HepG2 (cell line): ENCODE measurements at regions of chr14 and their contacts with region 1.

Region 1: GRCh38 chr14:70907176-70907995 is at the start of gene PCNX1:
- DNase-seq: peak; percentile 79
- ATAC-seq: peak; percentile 85
- H3K4me3 ChIP-seq: peak within 1 kb of the TSS; percentile 92 to 98 (median 96)
- H3K27ac ChIP-seq: peak within 1 kb of the TSS; percentile 81
- H3K4me1 ChIP-seq: peaks cover 55% of the 10 kb centered on the region
- H3K27me3 ChIP-seq: no peaks in the 10 kb centered on the region; a peak in 2 of 5 replicates
- CTCF ChIP-seq: peak; percentile 83
- EP300 ChIP-seq: no peak
- POLR2A ChIP-seq: peak in 1 of 2 experiments; percentile 41; a peak in 1 of 4 replicates
- RAD21 ChIP-seq: peak; percentile 89
- total RNA-seq, gene PCNX1: 24.9 and 25.8 TPM in 2 replicates

Region 2: GRCh38 chr14:70894868-70895267 is 12.5 kb before region 1 on chr14:
- CTCF ChIA-PET with region 1: no interaction called
- POLR2A ChIA-PET with region 1: interaction called, 10 read pairs
- in situ Hi-C with region 1: no loop called
- intact Hi-C with region 1: no loop called
- DNase-seq: peak; percentile 96
- ATAC-seq: peak; percentile 99
- H3K4me3 ChIP-seq: peak overlapping the region in 1 of 3 experiments; percentile 14; a peak in 1 of 6 replicates
- H3K27ac ChIP-seq: peak overlapping the region; percentile 44
- H3K4me1 ChIP-seq: peaks cover 42% of the 10 kb centered on the region
- H3K27me3 ChIP-seq: peaks cover 0 to 3% of the 10 kb centered on the region in 2 experiments; a peak in 2 of 5 replicates
- CTCF ChIP-seq: 0 out of 2 replicates have a peak, but pooled peaks have one; percentile 19
- EP300 ChIP-seq: peak in 1 of 2 experiments; percentile 54; a peak in 1 of 4 replicates
- POLR2A ChIP-seq: no peak
- RAD21 ChIP-seq: no peak

Region 3: DNA sequence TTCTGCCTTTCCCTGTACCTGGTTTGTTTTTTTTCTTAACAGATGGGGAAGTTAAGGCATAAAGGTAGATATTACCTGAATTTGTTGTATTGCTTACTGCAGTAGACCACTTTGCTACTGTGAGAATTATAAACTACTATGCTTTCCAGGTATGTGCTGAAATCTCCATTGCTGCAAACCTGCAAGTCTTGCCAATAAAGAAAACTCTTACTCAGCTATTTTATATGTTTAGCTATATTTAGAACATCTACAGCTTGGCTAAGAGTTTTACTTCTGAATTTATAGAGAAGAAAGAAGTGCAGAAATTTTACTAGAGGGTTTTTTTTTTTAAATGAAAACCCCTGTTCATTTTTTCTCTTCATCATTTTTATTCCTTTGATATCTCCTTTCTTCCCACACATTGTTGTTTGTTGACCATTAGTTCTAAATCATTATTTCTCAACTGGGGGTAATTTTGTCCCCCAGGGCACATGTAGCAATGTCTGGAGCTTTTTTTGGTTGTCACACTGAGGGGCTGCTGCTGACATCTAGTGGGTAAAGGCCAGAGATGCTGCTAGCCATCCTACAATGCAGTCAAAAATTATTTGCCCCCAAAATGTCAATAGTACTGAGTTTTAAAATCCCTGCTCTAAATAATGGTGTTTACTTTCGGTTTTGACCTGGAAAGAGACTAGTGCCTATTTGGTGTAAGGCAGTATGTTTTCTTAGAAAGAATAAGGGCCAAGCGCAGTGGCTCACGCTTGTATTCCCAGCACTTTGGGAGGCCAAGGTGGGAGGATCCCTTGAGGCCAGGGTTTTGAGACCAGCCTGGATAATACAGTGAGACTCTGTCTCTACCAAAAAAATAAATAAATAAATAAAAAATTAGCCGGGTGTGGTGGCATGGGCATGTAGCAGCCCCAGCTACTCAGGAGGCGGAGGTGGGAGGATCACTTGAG is 48.4 kb after region 1 on chr14:
- CTCF ChIA-PET with region 1: interaction called, 6 read pairs
- POLR2A ChIA-PET with region 1: interaction called, 5 read pairs
- in situ Hi-C with region 1: loop called (anchors 5 kb)
- intact Hi-C with region 1: loop called (anchors 1 kb)
- DNase-seq: peak; percentile 29
- ATAC-seq: peak; percentile 71
- H3K4me3 ChIP-seq: no peak overlapping the region
- H3K27ac ChIP-seq: no peak overlapping the region
- H3K4me1 ChIP-seq: no peaks in the 10 kb centered on the region
- H3K27me3 ChIP-seq: no peaks in the 10 kb centered on the region
- CTCF ChIP-seq: peak; percentile 66
- EP300 ChIP-seq: no peak
- POLR2A ChIP-seq: no peak
- RAD21 ChIP-seq: peak; percentile 62; the same call in 1 of the 2 replicates

Region 4: GRCh38 chr14:70962935-70963334 is 55.5 kb after region 1 on chr14:
- CTCF ChIA-PET with region 1: no interaction called
- POLR2A ChIA-PET with region 1: no interaction called
- in situ Hi-C with region 1: loop called (anchors 5 kb)
- intact Hi-C with region 1: no loop called
- DNase-seq: no peak
- ATAC-seq: no peak
- H3K4me3 ChIP-seq: no peak overlapping the region
- H3K27ac ChIP-seq: no peak overlapping the region
- H3K4me1 ChIP-seq: peaks cover 22% of the 10 kb centered on the region
- H3K27me3 ChIP-seq: no peaks in the 10 kb centered on the region
- CTCF ChIP-seq: no peak
- EP300 ChIP-seq: no peak
- POLR2A ChIP-seq: no peak
- RAD21 ChIP-seq: no peak

Region 5: DNA sequence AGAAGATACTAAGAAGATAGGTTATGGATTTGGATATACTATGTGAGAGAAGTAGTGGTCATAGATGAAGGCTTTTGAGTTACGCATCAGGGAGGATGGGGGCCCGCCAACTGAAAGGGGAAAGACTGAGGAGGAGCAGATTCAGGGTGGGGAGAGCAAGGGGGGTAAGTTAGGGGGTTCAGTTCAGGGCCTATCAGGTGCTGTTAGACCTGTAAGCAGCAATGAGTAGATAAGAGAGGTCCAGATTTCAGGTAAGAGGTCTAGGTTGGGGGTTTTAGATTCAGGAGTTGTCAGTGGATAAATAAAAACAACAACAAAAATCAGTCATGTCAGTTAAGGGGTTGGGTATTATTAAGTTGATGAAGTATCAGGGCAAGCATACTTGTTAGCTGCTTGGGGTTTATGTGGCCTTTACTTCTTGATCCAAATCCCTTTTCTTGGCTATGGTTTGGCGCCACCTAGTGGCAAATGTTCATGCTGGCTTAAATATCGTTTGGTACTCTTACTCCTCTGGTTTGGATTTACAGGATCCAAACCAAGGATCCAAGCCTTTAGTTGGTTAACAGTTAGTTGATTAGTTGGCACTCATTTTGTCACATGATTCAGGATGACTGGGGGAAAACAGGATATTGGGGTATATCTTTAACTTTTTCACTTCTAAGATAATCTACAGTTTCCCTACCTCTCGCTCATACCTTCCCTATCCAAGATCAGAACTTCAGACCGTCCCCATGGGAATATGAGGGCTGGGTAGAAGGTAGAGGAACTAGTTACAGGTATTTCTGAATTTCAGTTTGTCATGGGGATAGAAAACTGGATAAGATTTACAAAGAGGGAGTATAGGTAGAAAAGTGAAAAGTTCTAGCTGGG is 65.0 kb after region 1 on chr14:
- CTCF ChIA-PET with region 1: interaction called, 10 read pairs
- POLR2A ChIA-PET with region 1: no interaction called
- in situ Hi-C with region 1: no loop called
- intact Hi-C with region 1: loop called (anchors 5 kb)
- DNase-seq: peak; percentile 67
- ATAC-seq: peak; percentile 80
- H3K4me3 ChIP-seq: no peak overlapping the region
- H3K27ac ChIP-seq: no peak overlapping the region
- H3K4me1 ChIP-seq: no peaks in the 10 kb centered on the region
- H3K27me3 ChIP-seq: no peaks in the 10 kb centered on the region
- CTCF ChIP-seq: peak; percentile 86
- EP300 ChIP-seq: no peak
- POLR2A ChIP-seq: no peak
- RAD21 ChIP-seq: peak; percentile 60; the same call in 1 of the 2 replicates